ENCODE measurements at regions of chr16 and their contacts with region 1.

Region 1: DNA sequence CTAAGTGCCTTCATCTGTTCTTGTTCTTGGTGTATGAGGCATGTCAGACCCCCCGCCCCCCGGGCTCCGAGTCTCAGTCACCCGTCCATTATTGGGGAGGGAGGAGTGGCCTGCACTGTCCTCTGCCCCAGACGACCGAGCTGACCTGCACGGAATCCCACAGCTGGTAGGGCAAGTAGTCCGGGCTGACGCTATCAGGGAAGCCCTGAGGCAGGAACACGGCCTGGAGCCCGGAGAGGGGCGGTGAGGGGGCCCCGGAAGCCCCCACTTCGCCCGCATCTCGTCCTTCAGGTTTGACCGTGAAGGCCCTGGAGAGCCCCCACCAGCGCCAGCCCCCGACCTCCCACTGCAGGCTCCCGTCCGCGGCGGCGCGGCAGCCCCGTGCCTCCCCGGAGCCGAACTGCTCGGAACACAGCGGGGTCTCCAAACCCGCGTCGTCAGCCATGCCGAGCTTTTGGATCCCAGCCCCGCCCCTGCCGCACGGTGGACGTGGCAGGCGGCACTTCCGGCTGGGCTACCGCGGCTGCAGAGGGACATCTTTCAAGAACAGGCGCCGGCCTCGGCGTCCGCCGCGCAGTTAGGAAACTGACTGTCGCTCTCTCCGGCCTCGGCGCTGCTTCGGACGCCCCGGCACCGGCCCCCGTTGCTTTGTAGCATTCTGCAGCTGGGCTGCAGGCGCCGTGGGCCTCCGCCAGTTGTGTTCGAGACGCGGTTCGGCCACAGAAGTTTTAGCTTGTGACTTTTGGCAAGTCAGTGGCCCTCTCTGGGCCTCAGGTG is at the start of gene RUSF1:
- DNase-seq: peak; percentile 92 to 93
- ATAC-seq: peak; percentile 96 to 97 (median 97)
- H3K4me3 ChIP-seq: peak within 1 kb of the TSS; percentile 79 to 98 (median 88)
- H3K27ac ChIP-seq: peak within 1 kb of the TSS; percentile 83 to 99 (median 95)
- H3K4me1 ChIP-seq: peaks cover 5 to 58% (median 48%) of the 10 kb centered on the region in 9 donors
- H3K27me3 ChIP-seq: no peaks in the 10 kb centered on the region
- CTCF ChIP-seq: no peak
- total RNA-seq, gene RUSF1: 21.9 to 28.0 (median 24.4) TPM

Region 2: GRCh38 chr16:31128711-31129567 is 379.2 kb before region 1 on chr16:
- intact Hi-C with region 1: no loop called
- DNase-seq: peak in 1 of 2 donors; percentile 26
- ATAC-seq: peak; percentile 48 to 80 (median 66)
- H3K4me3 ChIP-seq: peak overlapping the region in 1 of 10 donors; percentile 18
- H3K27ac ChIP-seq: peak overlapping the region; percentile 20 to 97 (median 72)
- H3K4me1 ChIP-seq: peaks cover 1 to 49% (median 25%) of the 10 kb centered on the region in 9 donors
- H3K27me3 ChIP-seq: no peaks in the 10 kb centered on the region
- CTCF ChIP-seq: no peak

Region 3: GRCh38 chr16:31472709-31473203 is 35.4 kb before region 1 on chr16:
- intact Hi-C with region 1: loop called in 4 of 10 experiments (anchors 5 kb)
- DNase-seq: peak; percentile 90 to 92
- ATAC-seq: peak; percentile 85 to 95 (median 92)
- H3K4me3 ChIP-seq: peak overlapping the region; percentile 54 to 78 (median 72)
- H3K27ac ChIP-seq: peak overlapping the region; percentile 90 to 96 (median 94)
- H3K4me1 ChIP-seq: peaks cover 8 to 32% (median 18%) of the 10 kb centered on the region in 9 donors
- H3K27me3 ChIP-seq: peaks cover 0 to 29% (median 0%) of the 10 kb centered on the region in 7 donors
- CTCF ChIP-seq: peak; percentile 44 to 85 (median 73)

Region 4: DNA sequence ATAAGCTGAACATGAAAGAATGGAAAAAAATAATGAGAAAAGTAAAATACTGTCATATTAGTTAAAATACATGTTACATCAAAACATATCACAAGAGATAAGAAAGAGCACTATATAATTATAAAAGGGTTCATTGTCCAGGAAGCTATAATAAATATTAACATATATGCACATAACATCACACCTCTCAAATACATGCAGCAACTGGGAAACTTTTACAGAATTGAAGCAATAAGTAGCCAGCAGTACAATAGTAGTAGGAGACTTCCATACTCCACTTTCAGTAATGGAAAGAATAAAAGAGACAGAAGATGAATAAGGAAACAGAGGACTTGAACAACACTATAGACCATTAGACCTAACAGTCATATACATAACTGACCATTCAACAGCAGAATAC is 110.0 kb after region 1 on chr16:
- intact Hi-C with region 1: no loop called
- DNase-seq: no peak
- ATAC-seq: no peak
- H3K4me3 ChIP-seq: no peak overlapping the region
- H3K27ac ChIP-seq: no peak overlapping the region
- H3K4me1 ChIP-seq: no peaks in the 10 kb centered on the region
- H3K27me3 ChIP-seq: peaks cover 0 to 9% (median 0%) of the 10 kb centered on the region in 7 donors
- CTCF ChIP-seq: no peak

Region 5: DNA sequence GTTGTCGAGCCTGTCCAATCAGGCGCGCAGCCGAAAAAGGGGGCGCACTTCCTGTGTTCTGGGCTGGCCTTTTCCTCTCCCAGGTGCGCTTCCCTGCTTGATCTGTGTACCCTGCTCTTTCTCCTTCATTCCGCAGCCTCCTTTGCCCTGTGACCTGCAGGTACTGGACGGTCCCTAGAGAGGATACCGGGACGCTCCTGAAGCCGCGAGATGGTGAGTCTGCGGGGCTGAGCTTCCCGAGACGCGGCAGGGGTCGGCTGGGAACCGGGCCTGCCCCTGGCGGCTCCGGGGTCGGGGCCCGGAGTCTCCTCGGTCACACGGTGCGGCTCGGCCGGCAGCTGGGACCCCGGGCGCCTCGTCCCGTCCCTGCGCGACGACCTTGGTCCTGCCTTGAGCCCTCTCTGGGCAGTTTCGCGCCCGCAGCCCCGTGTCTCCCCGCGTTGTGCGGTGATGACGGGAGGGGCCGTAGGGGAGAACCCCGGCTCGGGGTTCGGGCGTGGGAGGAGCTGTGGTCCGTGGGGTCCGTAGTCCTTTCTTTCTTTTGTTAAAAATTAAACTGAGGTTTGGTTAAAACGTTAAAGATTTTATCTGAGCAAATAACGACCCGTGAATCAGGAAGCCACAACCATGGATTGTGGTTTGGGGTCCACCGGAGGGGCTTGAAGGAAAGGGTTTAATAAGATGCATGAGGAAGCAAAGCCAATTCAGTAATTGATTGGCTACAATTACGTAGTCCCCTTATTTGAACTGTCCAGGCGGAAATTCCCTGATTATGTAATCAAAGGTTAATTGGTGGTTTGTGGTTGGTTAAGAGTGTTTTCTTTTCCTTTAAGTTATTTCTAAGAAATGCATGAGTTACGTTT is 192.6 kb after region 1 on chr16:
- intact Hi-C with region 1: loop called in 2 of 10 experiments (anchors 5 to 10 kb)
- DNase-seq: peak; percentile 79 to 81
- ATAC-seq: peak; percentile 34 to 98 (median 94)
- H3K4me3 ChIP-seq: peak overlapping the region; percentile 56 to 98 (median 81)
- H3K27ac ChIP-seq: peak overlapping the region in 8 of 10 donors; percentile 25 to 84 (median 50)
- H3K4me1 ChIP-seq: peaks cover 0 to 21% (median 11%) of the 10 kb centered on the region in 9 donors
- H3K27me3 ChIP-seq: peaks cover 0 to 17% (median 0%) of the 10 kb centered on the region in 7 donors
- CTCF ChIP-seq: peak in 6 of 9 donors; percentile 17 to 44 (median 27)

Region 6: DNA sequence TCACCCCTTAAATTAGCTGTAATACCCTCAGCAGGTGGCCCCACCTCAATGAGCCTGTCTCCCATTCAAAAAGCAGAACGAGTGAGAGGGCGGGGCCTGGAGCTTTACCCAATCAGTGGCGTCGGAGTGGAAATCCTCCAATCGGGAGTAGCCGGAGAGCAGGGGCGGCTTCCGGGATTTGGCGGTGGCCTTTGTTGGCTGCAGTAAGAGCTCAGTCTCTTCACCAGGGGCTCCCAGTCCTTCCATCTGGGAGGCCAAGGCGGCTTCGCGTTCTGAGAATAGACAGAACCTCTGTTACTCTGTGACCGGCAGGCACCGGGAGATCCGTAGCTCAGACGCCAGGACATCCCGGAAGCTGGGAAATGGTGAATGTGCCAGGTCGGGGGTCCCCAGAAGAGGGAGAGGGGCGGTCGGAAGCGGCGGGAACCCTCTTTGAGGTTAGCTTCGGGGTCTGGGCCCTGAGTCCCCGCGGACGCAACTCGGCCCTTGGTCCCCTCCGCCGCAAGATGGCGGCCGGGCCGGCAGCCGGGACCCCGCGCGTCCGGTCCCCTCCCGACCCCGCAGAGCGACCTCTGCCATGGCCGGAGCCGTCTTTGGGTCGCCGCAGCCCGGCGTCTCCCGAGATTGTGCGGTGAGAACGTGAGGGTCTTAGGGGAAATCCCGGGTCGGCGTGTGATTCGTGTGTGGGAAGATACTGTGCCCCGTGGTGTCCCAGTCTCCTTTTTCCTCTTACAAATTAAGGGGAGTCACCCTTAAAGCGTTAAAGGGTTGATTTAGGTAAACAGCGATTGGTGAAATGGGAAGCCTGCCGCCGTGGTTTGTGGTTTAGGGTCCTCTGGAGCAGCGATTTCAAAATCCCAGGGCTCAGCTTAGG is 205.2 kb after region 1 on chr16:
- intact Hi-C with region 1: loop called in 2 of 10 experiments (anchors 10 kb)
- DNase-seq: peak; percentile 91 to 95
- ATAC-seq: peak; percentile 93 to 98 (median 97)
- H3K4me3 ChIP-seq: peak overlapping the region; percentile 70 to 98 (median 84)
- H3K27ac ChIP-seq: peak overlapping the region; percentile 77 to 99 (median 95)
- H3K4me1 ChIP-seq: peaks cover 7 to 35% (median 22%) of the 10 kb centered on the region in 9 donors
- H3K27me3 ChIP-seq: no peaks in the 10 kb centered on the region
- CTCF ChIP-seq: peak in 2 of 9 donors; percentile 9 to 14

Region 7: DNA sequence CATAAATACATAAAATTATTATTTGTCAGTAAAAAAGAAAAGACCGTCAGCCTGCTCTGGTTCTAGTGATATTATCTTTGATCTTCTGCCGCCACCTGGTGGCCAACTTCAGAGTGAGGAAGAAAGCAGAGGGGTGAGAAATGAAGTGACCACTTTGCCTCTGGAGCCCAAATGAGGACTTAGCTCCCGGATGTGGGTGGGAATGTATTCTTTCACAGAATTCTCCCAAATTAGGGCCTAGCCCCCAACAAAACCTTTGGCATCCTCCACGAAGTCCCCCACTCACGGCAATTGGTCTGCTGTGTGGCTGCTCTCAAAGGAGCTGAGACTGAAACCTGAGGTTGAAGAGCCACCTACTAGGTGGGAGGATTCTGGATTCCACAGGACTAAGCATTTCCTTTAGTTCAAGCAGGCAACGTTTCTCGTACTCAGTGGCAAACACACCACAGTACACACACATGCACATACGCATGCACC is 360.6 kb after region 1 on chr16:
- intact Hi-C with region 1: loop called in 1 of 10 experiments (anchors 10 kb)
- DNase-seq: peak; percentile 63 to 82
- ATAC-seq: peak; percentile 38 to 78 (median 66)
- H3K4me3 ChIP-seq: peak overlapping the region in 2 of 10 donors; percentile 20 to 22
- H3K27ac ChIP-seq: peak overlapping the region in 4 of 10 donors; percentile 0 to 93 (median 36)
- H3K4me1 ChIP-seq: peaks cover 0 to 36% (median 8%) of the 10 kb centered on the region in 9 donors
- H3K27me3 ChIP-seq: peaks cover 0 to 4% (median 0%) of the 10 kb centered on the region in 7 donors
- CTCF ChIP-seq: peak; percentile 74 to 91 (median 83)

Measured in heart right ventricle (tissue), 16 donors.